Astrocyte of the cerebellum (primary cell): ENCODE measurements at regions of chr5 and their contacts with region 1.

Region 1: DNA sequence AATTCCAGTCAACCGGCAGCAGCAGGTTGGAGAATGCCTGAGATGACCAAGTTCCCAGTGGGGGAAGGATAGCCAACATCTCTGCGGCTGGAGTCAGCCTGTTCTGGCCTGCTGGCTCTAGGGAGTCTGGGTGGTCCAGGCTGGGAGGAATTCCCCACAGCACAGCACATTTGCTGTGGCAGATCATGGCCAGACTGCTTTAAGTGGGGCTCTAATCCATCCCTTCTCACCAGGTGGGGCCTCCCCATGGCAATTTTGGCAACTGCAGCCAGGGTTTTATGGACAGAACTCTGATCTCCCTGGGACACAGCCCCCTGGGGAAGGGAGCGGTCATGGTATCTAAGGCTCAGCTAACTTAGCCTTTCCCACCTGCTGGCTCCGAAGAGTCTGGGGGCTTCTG is 226.1 kb downstream of the DTWD2 start:
- DNase-seq: no peak
- H3K4me3 ChIP-seq: no peak overlapping the region
- CTCF ChIP-seq: no peak

Region 2: DNA sequence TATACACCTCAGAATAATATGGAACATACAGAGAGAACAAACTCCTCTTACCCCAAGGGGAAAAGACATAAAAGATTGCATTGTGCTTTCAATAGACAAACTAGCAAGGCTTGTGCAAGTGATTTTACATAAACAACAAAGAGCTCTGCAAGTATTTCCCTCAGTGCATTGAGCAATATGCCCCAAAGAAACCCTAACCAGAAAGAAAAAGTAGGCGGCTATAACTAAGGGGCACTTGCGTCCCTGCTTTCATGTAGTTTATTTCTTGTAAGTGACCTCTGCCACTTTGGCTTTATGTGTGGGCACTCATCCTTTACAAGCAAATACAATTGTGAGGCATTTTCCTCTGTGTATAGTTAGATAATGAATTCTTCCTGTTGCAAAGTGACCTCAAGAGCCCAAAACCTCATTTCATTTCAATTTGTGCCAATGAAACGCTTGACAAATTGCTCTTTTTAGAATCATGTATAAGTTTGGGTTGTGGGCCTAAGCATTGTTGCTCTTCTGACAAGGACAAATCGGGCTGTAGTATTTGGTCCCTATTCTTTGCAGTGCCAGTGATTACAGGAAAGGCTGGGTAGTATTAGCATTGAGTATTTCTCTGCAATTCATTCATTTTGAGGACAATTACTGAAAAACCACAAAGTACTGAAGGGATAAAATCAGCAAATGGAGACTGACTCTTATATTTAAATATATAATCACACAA is 56.2 kb before region 1 on chr5:
- in situ Hi-C with region 1: loop called (anchors 5 kb)
- DNase-seq: no peak
- H3K4me3 ChIP-seq: no peak overlapping the region
- CTCF ChIP-seq: no peak